ENCODE measurements at regions of chr17 and their contacts with region 1.

Region 1: GRCh38 chr17:56833809-56834379 is at the starts of genes C17orf67 and DGKE:
- DNase-seq: peak; percentile 93
- H3K4me3 ChIP-seq: peak within 1 kb of the TSS; percentile 77
- H3K27ac ChIP-seq: peak within 1 kb of the TSS; percentile 52
- H3K4me1 ChIP-seq: peaks cover 59% of the 10 kb centered on the region
- CTCF ChIP-seq: no peak
- total RNA-seq, gene C17orf67: 5.2 and 5.8 TPM in 2 replicates
- total RNA-seq, gene DGKE: 6.2 and 8.6 TPM in 2 replicates

Region 2: GRCh38 chr17:56845934-56846333 is 12.0 kb after region 1 on chr17:
- CTCF ChIA-PET with region 1: interaction called, 3 read pairs
- POLR2A ChIA-PET with region 1: interaction called, 10 read pairs
- intact Hi-C with region 1: no loop called
- DNase-seq: no peak
- H3K4me3 ChIP-seq: no peak overlapping the region
- H3K27ac ChIP-seq: no peak overlapping the region
- H3K4me1 ChIP-seq: peaks cover 9% of the 10 kb centered on the region
- CTCF ChIP-seq: no peak

Region 3: DNA sequence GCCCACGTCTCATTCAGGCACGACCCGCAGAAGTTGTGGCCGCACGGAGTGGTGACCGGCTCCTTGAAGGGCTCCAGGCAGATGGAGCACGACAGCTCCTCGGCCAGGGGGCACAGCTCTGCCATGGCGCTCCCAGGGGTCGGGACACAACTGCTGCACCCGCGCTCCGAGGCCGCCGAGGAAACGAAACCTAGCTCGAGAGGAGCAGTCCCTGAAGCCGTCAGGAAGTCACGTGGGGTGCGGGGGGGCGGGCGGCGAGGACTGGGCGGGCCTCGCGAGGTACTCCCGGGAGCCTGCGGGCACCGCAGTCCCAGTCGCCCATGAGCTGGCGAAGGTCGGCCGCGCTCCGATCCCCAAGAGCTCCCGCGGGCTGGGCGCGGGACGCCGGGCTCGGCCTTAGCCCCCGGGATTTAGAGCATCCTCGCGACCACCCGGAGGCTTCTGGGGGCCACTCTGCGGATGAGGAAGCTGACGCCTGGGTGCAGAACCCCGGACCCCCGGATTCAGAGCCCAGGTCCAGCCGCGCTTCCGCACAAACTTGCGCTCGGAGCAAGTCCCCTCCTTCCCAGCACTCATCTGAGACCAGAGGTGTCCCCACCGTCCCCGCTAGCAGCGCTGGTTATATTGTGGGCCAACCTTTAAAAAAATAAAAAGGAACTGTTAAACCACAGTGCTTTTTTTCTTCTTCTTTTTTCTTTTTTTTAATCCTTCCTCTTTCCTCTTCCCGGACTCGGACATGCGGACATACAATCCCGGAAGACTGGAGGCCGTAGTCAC is 80.2 kb after region 1 on chr17 and contains the start of gene TRIM25:
- CTCF ChIA-PET with region 1: no interaction called
- POLR2A ChIA-PET with region 1: no interaction called
- intact Hi-C with region 1: loop called (anchors 5 kb)
- DNase-seq: peak; percentile 78
- H3K4me3 ChIP-seq: peak within 1 kb of the TSS; percentile 70
- H3K27ac ChIP-seq: no peak within 1 kb of the TSS
- H3K4me1 ChIP-seq: peaks cover 32% of the 10 kb centered on the region
- CTCF ChIP-seq: no peak
- total RNA-seq, gene TRIM25: 5.0 and 7.8 TPM in 2 replicates